HepG2 (cell line): ENCODE measurements at regions of chr12 and their contacts with region 1.

Region 1: DNA sequence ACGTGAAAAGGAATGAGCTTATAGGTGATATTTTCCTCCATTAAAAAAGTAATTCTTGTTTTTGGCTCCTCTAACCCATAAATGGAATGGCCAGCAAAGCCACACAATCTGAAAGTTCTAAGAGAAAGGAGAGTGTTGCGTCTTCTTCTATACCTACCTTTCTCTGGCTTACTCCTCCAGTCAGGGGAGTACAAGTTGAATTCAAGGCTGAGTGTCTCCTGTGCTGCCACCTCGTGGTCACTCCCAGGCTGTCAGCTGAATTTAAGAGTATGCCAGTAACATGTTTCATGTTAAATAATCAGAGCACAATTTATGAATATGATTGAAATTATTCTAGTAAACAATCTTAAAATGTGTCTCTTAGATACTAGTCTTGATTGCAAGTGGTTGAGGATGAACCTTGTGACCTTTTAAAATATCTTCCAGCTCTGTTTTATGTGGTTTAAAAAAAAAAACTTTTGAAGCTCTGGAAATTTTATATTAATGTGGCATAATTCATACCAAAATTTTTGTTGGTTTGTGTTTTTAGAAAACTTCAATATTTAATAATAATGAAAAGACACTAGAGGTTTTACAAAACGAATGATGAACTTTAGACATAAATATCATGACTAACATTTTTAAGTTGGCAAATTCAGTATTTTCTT is 31.7 kb downstream of the PTHLH start:
- DNase-seq: peak; percentile 65
- ATAC-seq: peak; percentile 88
- H3K4me3 ChIP-seq: no peak overlapping the region
- H3K27ac ChIP-seq: no peak overlapping the region
- H3K4me1 ChIP-seq: no peaks in the 10 kb centered on the region
- H3K27me3 ChIP-seq: no peaks in the 10 kb centered on the region
- CTCF ChIP-seq: peak; percentile 86
- EP300 ChIP-seq: no peak
- POLR2A ChIP-seq: no peak
- RAD21 ChIP-seq: peak; percentile 66; the same call in 1 of the 2 replicates

Region 2: DNA sequence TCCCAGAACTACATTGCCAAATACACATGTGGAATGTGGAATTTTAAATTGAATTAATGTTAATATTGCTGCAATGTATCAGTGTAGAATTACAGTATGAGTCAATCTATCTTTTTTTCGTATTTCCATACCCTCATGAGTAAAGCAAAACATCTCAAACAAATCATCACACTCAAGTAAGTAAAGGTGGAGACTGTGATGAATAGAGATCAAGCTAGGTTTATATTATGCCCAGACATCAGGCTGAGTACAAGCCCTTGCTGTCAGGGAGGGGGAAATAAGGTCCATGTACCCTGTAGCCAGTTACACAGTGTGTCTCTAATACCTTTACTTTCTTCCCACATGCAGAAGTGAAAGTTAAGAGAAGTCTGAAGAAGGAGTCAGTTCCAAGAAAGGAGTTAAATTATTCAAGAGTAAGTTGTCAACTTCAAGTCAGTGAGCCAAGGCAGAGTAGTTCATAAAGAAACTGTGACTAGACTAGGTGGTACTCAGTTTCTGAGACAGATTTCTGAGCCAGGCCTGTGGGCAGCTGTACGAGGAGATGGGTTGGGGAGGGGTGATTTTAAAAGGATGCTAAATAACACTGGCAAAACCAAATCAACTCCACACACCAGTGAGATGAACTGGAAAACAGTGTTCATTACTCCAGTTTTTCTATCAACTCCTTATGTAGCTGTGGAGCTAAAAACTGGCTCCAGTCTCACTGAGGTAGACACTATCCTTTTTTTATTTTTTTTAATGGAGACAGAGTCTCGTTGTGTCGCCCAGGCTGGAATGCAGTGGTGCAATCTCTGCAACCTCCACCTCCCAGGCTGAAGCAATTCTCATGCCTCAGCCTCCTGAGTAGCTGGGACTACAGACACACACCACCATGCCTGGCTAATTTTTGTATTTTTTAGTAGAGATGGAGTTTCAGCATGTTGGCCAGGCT is 720.6 kb before region 1 on chr12:
- CTCF ChIA-PET with region 1: no interaction called
- POLR2A ChIA-PET with region 1: no interaction called
- in situ Hi-C with region 1: no loop called
- intact Hi-C with region 1: loop called (anchors 5 kb)
- DNase-seq: no peak
- ATAC-seq: no peak
- H3K4me3 ChIP-seq: no peak overlapping the region
- H3K27ac ChIP-seq: no peak overlapping the region
- H3K4me1 ChIP-seq: no peaks in the 10 kb centered on the region
- H3K27me3 ChIP-seq: no peaks in the 10 kb centered on the region
- CTCF ChIP-seq: no peak
- EP300 ChIP-seq: no peak
- POLR2A ChIP-seq: no peak
- RAD21 ChIP-seq: no peak

Region 3: GRCh38 chr12:27840244-27840999 is 100.5 kb before region 1 on chr12:
- CTCF ChIA-PET with region 1: no interaction called
- POLR2A ChIA-PET with region 1: no interaction called
- in situ Hi-C with region 1: no loop called
- intact Hi-C with region 1: loop called (anchors 10 kb)
- DNase-seq: no peak
- ATAC-seq: no peak
- H3K4me3 ChIP-seq: no peak overlapping the region
- H3K27ac ChIP-seq: no peak overlapping the region
- H3K4me1 ChIP-seq: peaks cover 29% of the 10 kb centered on the region
- H3K27me3 ChIP-seq: no peaks in the 10 kb centered on the region; a peak in 1 of 5 replicates
- CTCF ChIP-seq: no peak
- EP300 ChIP-seq: no peak
- POLR2A ChIP-seq: no peak
- RAD21 ChIP-seq: no peak